T-cell (primary cell): ENCODE measurements at regions of chr6 and their contacts with region 1.

Region 1: DNA sequence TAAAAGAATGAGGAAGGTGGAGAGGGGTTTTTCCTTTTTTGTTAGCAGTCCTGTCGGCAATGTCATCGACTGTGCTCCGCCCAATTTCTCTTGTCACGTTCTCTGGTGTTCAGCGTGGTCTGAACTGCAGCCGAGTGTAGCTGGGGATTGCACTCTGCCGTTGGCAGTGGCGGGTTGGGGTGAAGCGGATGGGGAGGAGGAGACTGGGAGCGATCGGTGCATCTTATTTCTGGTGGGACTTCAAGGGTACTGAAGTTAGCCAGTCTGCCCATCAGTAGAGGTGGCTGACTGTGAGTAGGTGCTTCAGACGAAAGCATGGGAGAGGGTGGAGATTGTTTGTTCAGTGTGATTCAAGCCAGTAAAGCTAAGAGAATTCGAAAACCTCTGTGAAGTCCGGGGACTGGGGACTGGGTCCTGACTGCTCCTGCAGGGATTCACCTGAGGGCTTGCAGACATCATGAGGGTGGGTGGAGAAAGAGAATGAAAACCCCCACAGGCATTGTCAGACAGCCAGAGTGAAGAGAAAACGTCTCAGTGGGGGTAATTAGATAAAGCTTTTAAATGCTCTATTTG is 5.1 kb downstream of the RREB1 start:
- DNase-seq: peak in 34 of 35 experiments; percentile 25 to 76 (median 56)
- ATAC-seq: peak; percentile 42 to 80 (median 50)
- H3K4me3 ChIP-seq: peak overlapping the region in 1 of 2 donors; percentile 27
- H3K4me3 Mint-ChIP-seq: peak overlapping the region; percentile 71 to 79 (median 71)
- H3K27ac ChIP-seq: peak overlapping the region; percentile 47
- H3K27ac Mint-ChIP-seq: peak overlapping the region; percentile 88 to 89
- H3K4me1 ChIP-seq: peaks cover 40 to 53% of the 10 kb centered on the region in 2 experiments
- H3K4me1 Mint-ChIP-seq: peaks cover 75 to 78% (median 76%) of the 10 kb centered on the region in 3 donors
- H3K27me3 ChIP-seq: no peaks in the 10 kb centered on the region
- H3K27me3 Mint-ChIP-seq: no peaks in the 10 kb centered on the region

Region 2: DNA sequence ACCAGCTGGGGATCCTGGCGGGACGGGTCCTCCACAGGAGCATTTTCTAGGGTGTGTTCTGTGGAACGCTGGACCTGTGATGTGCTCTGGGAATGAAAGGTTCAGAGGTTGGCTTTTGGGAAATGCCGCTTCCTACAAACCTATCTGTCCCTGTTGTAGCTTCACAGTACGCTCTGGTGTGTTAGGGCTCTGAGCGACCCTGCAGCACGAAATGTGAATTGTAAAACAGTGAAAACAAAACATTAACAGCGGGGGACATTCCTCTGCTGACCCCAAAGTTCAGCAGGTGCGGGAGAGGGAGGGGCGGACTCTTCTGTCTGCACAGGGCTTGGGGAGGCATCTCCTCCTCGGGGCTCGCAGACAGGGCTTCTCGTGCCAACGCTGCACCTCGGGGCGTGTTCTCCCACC is 1262.0 kb before region 1 on chr6:
- CTCF ChIA-PET with region 1: no interaction called
- POLR2A ChIA-PET with region 1: interaction called in 1 of 2 experiments, 12 read pairs
- DNase-seq: peak in 1 of 35 experiments; percentile 2
- ATAC-seq: peak; percentile 55 to 71 (median 58)
- H3K4me3 ChIP-seq: peak overlapping the region; percentile 46 to 77
- H3K4me3 Mint-ChIP-seq: peak overlapping the region; percentile 80
- H3K27ac ChIP-seq: no peak overlapping the region
- H3K27ac Mint-ChIP-seq: peak overlapping the region in 1 of 2 donors; percentile 76
- H3K4me1 ChIP-seq: peaks cover 6 to 16% of the 10 kb centered on the region in 2 experiments
- H3K4me1 Mint-ChIP-seq: peaks cover 5 to 12% (median 6%) of the 10 kb centered on the region in 3 donors
- H3K27me3 ChIP-seq: peaks cover 2 to 30% of the 10 kb centered on the region in 2 experiments
- H3K27me3 Mint-ChIP-seq: peaks cover 0 to 6% of the 10 kb centered on the region in 2 donors

Region 3: DNA sequence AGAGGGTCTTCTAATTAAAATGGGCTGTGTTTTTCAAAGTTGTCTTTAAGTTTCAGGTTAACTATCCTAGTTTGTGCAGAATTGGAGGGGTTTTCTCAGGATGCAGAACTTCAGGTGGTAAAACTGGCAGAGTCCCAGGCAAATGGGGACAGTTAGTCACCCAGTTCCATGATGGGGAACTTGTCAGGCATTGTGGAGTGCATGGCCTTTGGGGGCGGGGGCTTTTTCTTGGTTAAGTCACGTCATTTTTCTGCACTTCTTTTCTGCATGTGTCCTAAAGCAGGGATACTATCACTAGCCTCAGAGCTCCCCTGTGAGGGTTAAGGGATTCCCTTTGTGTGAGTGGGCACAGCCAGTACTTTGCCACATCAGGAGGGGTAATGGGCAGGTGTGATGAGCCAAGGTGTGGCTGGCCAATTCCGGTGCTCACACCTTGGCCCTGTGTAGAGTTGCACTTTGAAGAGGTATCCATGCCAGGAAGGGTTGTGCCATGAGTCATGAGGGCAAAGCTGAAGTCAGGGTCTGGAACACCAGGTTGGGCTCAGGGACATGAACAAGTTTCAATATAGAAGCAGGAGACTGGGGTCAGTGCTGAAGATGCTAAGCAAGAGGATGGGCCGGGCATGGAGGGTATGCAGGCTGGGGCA is 131.0 kb before region 1 on chr6:
- CTCF ChIA-PET with region 1: no interaction called
- POLR2A ChIA-PET with region 1: no interaction called
- DNase-seq: no peak
- ATAC-seq: no peak
- H3K4me3 ChIP-seq: no peak overlapping the region
- H3K4me3 Mint-ChIP-seq: no peak overlapping the region
- H3K27ac ChIP-seq: no peak overlapping the region
- H3K27ac Mint-ChIP-seq: no peak overlapping the region
- H3K4me1 ChIP-seq: no peaks in the 10 kb centered on the region
- H3K4me1 Mint-ChIP-seq: no peaks in the 10 kb centered on the region
- H3K27me3 ChIP-seq: no peaks in the 10 kb centered on the region
- H3K27me3 Mint-ChIP-seq: no peaks in the 10 kb centered on the region

Region 4: GRCh38 chr6:7086488-7086887 is 26.3 kb before region 1 on chr6:
- CTCF ChIA-PET with region 1: interaction called in 1 of 2 experiments, 4 read pairs
- POLR2A ChIA-PET with region 1: interaction called, 5 to 20 read pairs
- DNase-seq: peak in 23 of 35 experiments; percentile 4 to 68 (median 17)
- ATAC-seq: peak; percentile 61 to 80 (median 64)
- H3K4me3 ChIP-seq: peak overlapping the region in 1 of 2 donors; percentile 30
- H3K4me3 Mint-ChIP-seq: peak overlapping the region; percentile 74 to 82 (median 80)
- H3K27ac ChIP-seq: peak overlapping the region; percentile 15
- H3K27ac Mint-ChIP-seq: peak overlapping the region; percentile 80 to 96
- H3K4me1 ChIP-seq: peaks cover 25 to 29% of the 10 kb centered on the region in 2 experiments
- H3K4me1 Mint-ChIP-seq: peaks cover 31 to 41% (median 36%) of the 10 kb centered on the region in 3 donors
- H3K27me3 ChIP-seq: no peaks in the 10 kb centered on the region
- H3K27me3 Mint-ChIP-seq: no peaks in the 10 kb centered on the region

Region 5: DNA sequence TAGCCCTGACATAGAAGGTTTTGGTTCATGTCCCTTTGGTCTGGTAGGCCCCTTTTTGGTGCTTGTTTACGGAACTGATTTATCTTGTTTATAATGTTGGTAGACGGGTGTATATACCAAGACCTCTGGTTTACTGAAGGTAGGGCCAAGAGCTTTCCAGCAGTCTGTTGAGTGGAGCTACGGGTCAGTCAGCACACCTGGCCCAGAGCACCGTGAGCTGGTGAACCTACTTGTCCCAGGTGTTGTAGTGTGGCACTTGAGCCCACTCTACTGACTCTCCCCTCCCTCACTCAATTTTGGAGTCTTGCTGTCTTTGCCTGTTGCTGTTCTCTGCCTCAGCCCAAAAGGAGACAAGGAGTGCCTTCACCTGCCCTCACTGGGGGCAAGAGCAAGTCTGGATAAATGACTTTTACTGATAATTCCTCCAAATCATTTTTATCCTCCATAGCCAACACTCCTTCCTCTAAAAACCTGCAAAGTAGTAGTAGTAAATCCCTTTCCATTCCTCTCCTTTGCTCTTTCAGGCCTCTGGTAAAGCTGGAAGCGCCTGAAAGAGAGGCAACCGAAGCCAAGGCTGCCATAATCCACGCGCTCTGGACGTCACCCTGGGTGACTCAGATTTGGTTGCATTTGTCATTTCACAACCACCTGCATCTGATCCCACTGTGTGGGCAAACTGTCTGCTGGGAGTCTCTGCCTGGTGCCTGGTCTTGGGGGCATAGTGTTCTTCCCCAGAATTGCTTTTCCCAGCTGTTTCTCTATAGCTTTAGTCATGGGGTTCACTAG is 17.1 kb after region 1 on chr6:
- CTCF ChIA-PET with region 1: interaction called in 1 of 2 experiments, 3 read pairs
- POLR2A ChIA-PET with region 1: interaction called, 3 to 15 read pairs
- DNase-seq: peak in 2 of 35 experiments; percentile 18 to 20
- ATAC-seq: peak in 3 of 4 experiments; percentile 8 to 26 (median 23)
- H3K4me3 ChIP-seq: no peak overlapping the region
- H3K4me3 Mint-ChIP-seq: peak overlapping the region in 1 of 3 donors; percentile 77
- H3K27ac ChIP-seq: peak overlapping the region; percentile 14
- H3K27ac Mint-ChIP-seq: peak overlapping the region; percentile 88 to 90
- H3K4me1 ChIP-seq: peaks cover 36 to 52% of the 10 kb centered on the region in 2 experiments
- H3K4me1 Mint-ChIP-seq: peaks cover 79 to 86% (median 85%) of the 10 kb centered on the region in 3 donors
- H3K27me3 ChIP-seq: no peaks in the 10 kb centered on the region
- H3K27me3 Mint-ChIP-seq: no peaks in the 10 kb centered on the region

Region 6: GRCh38 chr6:7159790-7160525 is 47.1 kb after region 1 on chr6:
- CTCF ChIA-PET with region 1: no interaction called
- POLR2A ChIA-PET with region 1: interaction called, 3 to 11 read pairs
- DNase-seq: no peak
- ATAC-seq: no peak
- H3K4me3 ChIP-seq: no peak overlapping the region
- H3K4me3 Mint-ChIP-seq: no peak overlapping the region
- H3K27ac ChIP-seq: no peak overlapping the region
- H3K27ac Mint-ChIP-seq: no peak overlapping the region
- H3K4me1 ChIP-seq: peaks cover 16 to 21% of the 10 kb centered on the region in 2 experiments
- H3K4me1 Mint-ChIP-seq: peaks cover 74 to 80% (median 75%) of the 10 kb centered on the region in 3 donors
- H3K27me3 ChIP-seq: no peaks in the 10 kb centered on the region
- H3K27me3 Mint-ChIP-seq: no peaks in the 10 kb centered on the region